Activated T-helper 2 cell treated with anti-CD3 and anti-CD28 coated beads, Interferon-gamma antibody, Interleukin-2, Interleukin-4, amounts not matched to agents 10 μg/mL and 5 μg/mL and 100 μg/mL, durations not matched to agents 14 hours and 24 hours and 36 hours (primary cell): ENCODE measurements at regions of chr9 and their contacts with region 1.

Region 1: GRCh38 chr9:893843-894420 is 52.4 kb downstream of the DMRT1 start:
- DNase-seq: peak; percentile 45
- H3K4me3 Mint-ChIP-seq: no peak overlapping the region
- H3K27ac Mint-ChIP-seq: no peak overlapping the region
- H3K4me1 Mint-ChIP-seq: peaks cover 4% of the 10 kb centered on the region
- H3K27me3 Mint-ChIP-seq: peaks cover 19% of the 10 kb centered on the region

Region 2: DNA sequence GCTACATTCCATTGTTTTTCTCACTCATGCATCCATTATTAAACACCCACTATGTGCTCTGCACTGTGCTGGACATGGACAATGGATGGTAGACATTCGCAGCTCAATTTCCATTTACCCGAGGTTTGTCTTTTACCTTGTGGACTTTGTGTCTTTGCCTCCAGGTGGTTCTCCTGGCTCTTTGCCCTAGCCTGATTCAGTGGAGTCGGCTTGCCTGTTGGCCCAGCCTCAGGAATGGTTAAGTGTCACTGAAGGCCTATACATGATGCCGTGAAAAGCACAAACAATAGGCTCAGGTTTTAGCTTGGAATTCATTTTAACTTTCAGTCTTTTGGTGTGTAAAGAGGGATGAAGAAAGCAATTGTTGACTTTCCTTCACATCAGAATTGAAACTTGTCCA is 66.0 kb after region 1 on chr9:
- intact Hi-C with region 1: loop called (anchors 10 kb)
- DNase-seq: no peak
- H3K4me3 Mint-ChIP-seq: no peak overlapping the region
- H3K27ac Mint-ChIP-seq: no peak overlapping the region
- H3K4me1 Mint-ChIP-seq: no peaks in the 10 kb centered on the region
- H3K27me3 Mint-ChIP-seq: peaks cover 35% of the 10 kb centered on the region

Region 3: DNA sequence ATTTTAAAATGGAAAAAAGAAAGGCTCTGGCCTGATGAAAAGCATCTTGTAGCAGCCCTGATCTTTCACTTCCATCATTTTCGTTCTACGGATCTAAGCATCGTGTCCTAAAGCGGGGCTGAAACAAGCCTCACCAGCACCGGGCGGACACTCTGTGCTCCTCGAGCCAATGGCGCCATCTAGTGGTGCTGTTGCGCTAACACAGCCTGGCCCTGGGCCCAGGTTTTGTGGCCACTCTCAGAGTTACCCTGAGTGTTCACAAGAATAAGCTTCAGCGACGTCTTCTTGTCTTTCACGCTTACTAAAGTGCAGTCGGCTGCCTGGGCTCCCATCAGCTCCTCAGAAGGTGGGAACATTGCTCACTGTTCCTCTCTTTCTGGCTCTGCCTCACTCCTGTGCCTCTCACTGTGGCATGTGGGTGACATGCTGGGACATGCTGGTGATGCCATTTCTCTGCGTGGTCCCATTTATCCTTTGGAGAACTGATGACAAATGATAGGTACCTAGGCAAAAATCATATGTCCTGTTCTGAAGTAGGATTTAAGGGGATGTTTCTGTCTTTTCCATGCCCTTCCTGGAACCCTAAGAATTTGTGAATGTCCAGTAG is 115.3 kb after region 1 on chr9:
- intact Hi-C with region 1: loop called (anchors 1 kb)
- DNase-seq: peak; percentile 67
- H3K4me3 Mint-ChIP-seq: no peak overlapping the region
- H3K27ac Mint-ChIP-seq: no peak overlapping the region
- H3K4me1 Mint-ChIP-seq: peaks cover 11% of the 10 kb centered on the region
- H3K27me3 Mint-ChIP-seq: peaks cover 10% of the 10 kb centered on the region